ENCODE measurements at regions of chr13 and their contacts with region 1.

Region 1: GRCh38 chr13:19959831-19960652 is 1.5 kb downstream of the ZMYM2 start:
- DNase-seq: peak; percentile 68
- ATAC-seq: peak; percentile 65
- H3K4me3 ChIP-seq: peak overlapping the region; percentile 81
- H3K27ac ChIP-seq: peak overlapping the region; percentile 80
- H3K4me1 ChIP-seq: no peaks in the 10 kb centered on the region
- H3K27me3 ChIP-seq: no peaks in the 10 kb centered on the region
- CTCF ChIP-seq: peak; percentile 89 to 92 (median 90)
- EP300 ChIP-seq: no peak; a peak in 1 of 4 replicates
- POLR2A ChIP-seq: peak; percentile 70
- RAD21 ChIP-seq: peak; percentile 53

Region 2: GRCh38 chr13:19782049-19782726 is 177.9 kb before region 1 on chr13:
- CTCF ChIA-PET with region 1: interaction called, 3 read pairs
- POLR2A ChIA-PET with region 1: no interaction called
- RAD21 ChIA-PET with region 1: no interaction called
- SMC1A ChIA-PET with region 1: interaction called, 3 read pairs
- in situ Hi-C with region 1: no loop called
- intact Hi-C with region 1: loop called (anchors 5 kb)
- DNase-seq: no peak
- ATAC-seq: peak; percentile 75
- H3K4me3 ChIP-seq: peak overlapping the region; percentile 97
- H3K27ac ChIP-seq: peak overlapping the region; percentile 92
- H3K4me1 ChIP-seq: no peaks in the 10 kb centered on the region
- H3K27me3 ChIP-seq: no peaks in the 10 kb centered on the region
- CTCF ChIP-seq: no peak
- EP300 ChIP-seq: no peak
- POLR2A ChIP-seq: peak; percentile 62; the same call in 1 of the 2 replicates
- RAD21 ChIP-seq: no peak

Region 3: DNA sequence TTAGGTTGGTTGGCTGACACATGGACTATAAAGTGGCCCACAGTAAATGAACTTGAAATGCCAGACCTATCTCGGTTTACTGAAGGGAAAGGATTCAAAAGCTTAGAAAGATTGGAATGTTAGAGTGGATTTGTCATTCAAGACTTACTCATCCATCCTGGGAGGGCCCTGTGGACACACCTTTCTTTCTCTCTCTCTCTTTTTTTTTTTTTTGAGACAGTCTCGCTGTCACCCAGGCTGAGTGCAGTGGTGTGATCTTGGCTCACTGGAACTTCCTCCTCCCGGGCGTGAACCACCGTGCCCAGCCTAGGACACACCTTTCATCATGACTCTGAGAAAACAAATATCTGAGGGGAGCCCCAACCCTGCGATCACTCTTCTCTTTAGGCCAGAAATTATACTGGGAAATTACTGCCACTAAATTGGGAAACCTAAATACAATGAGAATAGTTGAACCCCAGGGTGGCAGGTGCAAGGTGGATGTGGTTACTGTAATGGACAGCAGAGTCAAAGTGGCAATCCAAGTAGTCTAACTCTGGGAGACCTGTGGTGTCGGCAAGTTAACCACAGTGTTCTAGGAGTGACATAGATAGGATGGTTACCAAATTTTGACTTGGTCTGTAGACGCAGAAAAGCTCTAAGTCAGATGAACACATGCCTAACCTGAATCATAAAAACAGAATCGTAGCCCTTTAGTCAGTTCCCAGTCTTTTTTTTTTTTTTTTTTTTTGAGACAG is 49.5 kb before region 1 on chr13:
- CTCF ChIA-PET with region 1: no interaction called
- POLR2A ChIA-PET with region 1: no interaction called
- RAD21 ChIA-PET with region 1: no interaction called
- SMC1A ChIA-PET with region 1: no interaction called
- in situ Hi-C with region 1: no loop called
- intact Hi-C with region 1: no loop called
- DNase-seq: no peak
- ATAC-seq: no peak
- H3K4me3 ChIP-seq: no peak overlapping the region
- H3K27ac ChIP-seq: no peak overlapping the region
- H3K4me1 ChIP-seq: no peaks in the 10 kb centered on the region
- H3K27me3 ChIP-seq: no peaks in the 10 kb centered on the region
- CTCF ChIP-seq: no peak
- EP300 ChIP-seq: no peak
- POLR2A ChIP-seq: no peak
- RAD21 ChIP-seq: no peak

Region 4: DNA sequence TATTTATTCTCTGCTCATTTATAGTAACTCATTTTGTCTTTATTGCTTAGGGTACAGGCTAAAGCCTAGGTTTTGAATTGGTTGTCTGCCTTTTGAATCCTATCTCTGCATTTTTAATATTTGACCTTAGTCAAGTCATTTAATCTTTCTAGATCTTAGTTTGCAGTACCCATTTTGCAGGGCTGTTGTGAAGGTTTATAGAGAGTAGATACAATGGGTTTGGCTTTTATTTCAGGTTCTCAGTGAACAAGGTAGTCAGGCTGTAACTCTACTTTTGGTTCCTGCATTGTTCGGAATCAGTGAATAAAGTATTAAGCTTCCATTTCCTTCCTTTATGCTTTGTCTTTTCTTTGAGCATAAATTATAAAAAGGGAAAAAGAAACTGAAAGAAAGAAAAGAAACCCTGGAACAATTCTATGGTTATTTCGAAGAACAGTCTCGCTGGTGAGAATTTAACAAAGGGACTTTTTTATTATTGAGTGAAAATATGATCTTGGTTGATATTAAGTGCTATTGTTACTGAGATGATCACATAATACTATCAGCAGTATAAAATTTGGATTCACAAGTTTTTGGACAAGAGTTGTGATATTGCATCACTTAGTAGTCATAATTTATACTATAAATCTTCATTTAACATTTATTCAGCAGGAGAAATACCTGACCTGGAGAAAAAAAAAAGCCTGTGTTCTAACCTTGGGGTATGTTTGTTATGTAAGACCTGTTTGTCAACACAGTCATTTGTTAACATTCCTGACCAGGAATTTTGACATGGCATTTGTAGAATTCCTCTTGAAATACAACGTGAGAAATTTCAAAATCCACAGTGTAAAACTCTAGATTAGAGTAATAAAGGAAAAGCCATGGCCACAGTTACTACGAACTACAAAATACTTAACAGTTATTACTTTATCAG is 89.8 kb after region 1 on chr13:
- CTCF ChIA-PET with region 1: no interaction called
- POLR2A ChIA-PET with region 1: no interaction called
- RAD21 ChIA-PET with region 1: no interaction called
- SMC1A ChIA-PET with region 1: no interaction called
- in situ Hi-C with region 1: no loop called
- intact Hi-C with region 1: no loop called
- DNase-seq: no peak
- ATAC-seq: peak; percentile 74
- H3K4me3 ChIP-seq: no peak overlapping the region
- H3K27ac ChIP-seq: peak overlapping the region; percentile 39; the same call in 1 of the 2 replicates
- H3K4me1 ChIP-seq: 0 out of 2 replicates have a peak, but pooled peaks cover 3% of the 10 kb centered on the region
- H3K27me3 ChIP-seq: no peaks in the 10 kb centered on the region
- CTCF ChIP-seq: no peak
- EP300 ChIP-seq: no peak
- POLR2A ChIP-seq: no peak
- RAD21 ChIP-seq: no peak